ENCODE measurements at regions of chr3 and their contacts with region 1.

Region 1: DNA sequence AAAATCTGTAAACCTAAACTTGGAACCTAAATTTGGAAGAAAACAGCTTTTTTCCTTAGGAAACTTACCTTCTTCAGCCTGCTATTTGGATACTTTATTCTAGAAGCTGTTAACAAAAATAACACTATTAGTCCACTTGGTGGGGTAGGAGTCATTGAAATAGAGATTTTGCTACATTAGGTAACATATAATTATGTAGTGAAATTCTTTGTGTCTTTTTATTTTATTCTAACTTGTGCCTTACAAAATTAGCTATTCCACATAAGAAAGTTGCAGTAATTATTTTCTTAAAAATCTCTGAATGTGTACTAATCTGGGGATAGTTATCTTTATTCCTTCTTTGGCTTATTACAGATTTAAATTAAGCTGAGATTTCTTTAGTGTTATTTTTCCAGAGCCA is 360.4 kb upstream of the ROBO2 start:
- DNase-seq: no peak
- ATAC-seq: no peak
- H3K4me3 ChIP-seq: no peak overlapping the region
- H3K27ac ChIP-seq: no peak overlapping the region
- H3K4me1 ChIP-seq: no peaks in the 10 kb centered on the region
- H3K27me3 ChIP-seq: no peaks in the 10 kb centered on the region
- CTCF ChIP-seq: no peak
- POLR2A ChIP-seq: no peak
- RAD21 ChIP-seq: no peak

Region 2: DNA sequence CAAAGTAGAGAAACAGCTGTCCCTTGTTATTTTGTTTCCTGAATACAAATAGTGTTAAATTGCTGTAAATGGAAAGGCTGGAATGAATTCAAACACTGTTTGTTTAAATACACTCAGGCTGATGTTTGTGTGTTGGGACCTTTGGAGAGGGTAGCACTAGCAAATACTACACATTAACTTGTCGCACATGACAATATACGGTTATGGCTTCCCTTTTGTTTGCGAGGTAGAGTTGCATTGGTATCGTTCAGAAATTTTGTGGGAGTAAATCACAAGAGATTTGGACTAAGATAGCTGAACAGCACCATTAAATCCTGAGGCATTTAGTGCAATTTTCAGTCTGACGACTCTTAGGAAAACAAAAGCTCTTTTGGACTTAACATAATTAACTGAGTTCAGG is 147.3 kb after region 1 on chr3:
- CTCF ChIA-PET with region 1: no interaction called
- POLR2A ChIA-PET with region 1: no interaction called
- dilution Hi-C with region 1: no loop called
- in situ Hi-C with region 1: no loop called
- intact Hi-C with region 1: no loop called
- DNase-seq: no peak
- ATAC-seq: 0 out of 2 replicates have a peak, but pooled peaks have one; percentile 14
- H3K4me3 ChIP-seq: no peak overlapping the region
- H3K27ac ChIP-seq: no peak overlapping the region
- H3K4me1 ChIP-seq: no peaks in the 10 kb centered on the region
- H3K27me3 ChIP-seq: no peaks in the 10 kb centered on the region
- CTCF ChIP-seq: no peak
- POLR2A ChIP-seq: no peak
- RAD21 ChIP-seq: no peak

Region 3: DNA sequence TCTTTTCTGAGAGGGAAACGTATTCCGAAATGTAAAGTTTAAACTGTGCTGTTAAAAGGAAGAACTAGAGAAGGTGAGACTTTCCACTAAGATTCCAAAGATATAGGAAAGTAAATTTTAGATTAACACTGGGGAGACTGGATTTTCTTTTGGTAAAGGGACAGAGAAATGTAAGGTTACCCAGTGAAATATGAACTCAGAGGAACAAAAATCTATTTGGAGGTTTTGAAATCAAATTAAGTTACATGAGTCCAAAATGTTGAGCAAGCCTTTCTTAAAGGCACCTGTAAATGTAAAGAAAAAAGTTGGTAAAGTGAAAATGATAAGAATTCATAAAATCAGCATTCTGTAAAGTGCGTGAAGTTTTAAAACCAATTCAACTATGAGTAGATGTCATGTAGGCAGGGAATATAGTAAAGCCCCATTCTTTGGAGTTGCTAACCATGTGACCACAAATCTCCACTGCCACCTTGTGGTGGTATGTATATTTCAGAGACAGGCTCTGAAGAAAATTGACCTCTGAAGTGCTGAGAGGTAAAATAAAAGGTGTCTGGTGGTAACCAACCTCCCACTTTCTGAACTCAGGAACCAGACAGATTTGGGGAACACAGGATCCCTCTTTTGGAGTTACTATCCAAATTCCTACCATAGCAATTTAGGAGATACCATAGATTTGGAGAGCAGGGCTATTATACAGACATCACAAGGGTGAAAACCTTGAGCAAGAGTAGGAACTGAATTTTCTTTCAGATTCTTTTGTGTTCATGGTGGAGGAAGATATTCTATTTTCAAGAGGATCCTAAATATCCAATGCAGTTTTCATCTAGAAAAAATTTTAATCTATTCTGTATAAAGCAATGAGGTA is 575.7 kb after region 1 on chr3:
- CTCF ChIA-PET with region 1: no interaction called
- POLR2A ChIA-PET with region 1: no interaction called
- dilution Hi-C with region 1: no loop called
- in situ Hi-C with region 1: no loop called
- intact Hi-C with region 1: loop called (anchors 2 kb)
- DNase-seq: peak; percentile 69
- ATAC-seq: peak; percentile 88
- H3K4me3 ChIP-seq: no peak overlapping the region
- H3K27ac ChIP-seq: no peak overlapping the region
- H3K4me1 ChIP-seq: no peaks in the 10 kb centered on the region
- H3K27me3 ChIP-seq: no peaks in the 10 kb centered on the region; the same call in 1 of the 2 replicates
- CTCF ChIP-seq: peak; percentile 74
- POLR2A ChIP-seq: no peak
- RAD21 ChIP-seq: peak; percentile 65

Measured in IMR-90 (cell line).